A549 (cell line): ENCODE measurements at regions of chr9 and their contacts with region 1.

Region 1: DNA sequence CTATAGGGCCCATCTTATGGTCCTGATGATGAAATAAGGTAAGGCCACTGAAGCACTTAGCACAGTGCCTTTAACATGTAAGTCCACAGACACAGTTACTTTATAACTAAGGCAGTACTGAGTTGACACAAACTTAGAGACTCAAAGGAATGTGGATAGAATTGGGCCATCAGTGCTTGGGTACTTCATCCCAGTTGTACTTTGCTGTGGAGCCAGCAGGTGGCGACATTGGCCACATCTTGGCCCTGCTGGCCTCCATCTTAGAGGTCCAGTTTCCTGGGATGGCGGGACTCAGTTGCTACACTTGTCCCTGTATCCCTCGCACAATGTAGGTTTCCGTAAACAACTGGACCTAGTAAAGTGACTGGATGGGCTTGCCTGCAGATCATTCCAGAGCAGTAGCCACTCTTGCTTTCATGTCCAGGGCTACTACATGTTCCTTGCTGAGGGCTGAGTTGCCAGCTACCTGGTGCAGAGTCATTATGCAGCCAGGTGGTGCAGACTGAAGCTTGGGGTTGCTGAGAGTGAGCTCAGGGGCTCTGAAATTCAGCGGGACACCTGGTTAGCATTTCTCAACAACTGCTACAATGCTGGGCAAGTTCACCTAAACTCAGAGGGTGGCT is 10.6 kb downstream of the MTAP start:
- DNase-seq: peak in 1 of 2 experiments; percentile 77
- ATAC-seq: peak; percentile 84 to 85
- H3K4me3 ChIP-seq: no peak overlapping the region
- H3K27ac ChIP-seq: peak overlapping the region; percentile 56 to 75
- H3K4me1 ChIP-seq: peaks cover 51% of the 10 kb centered on the region
- CTCF ChIP-seq: peak; percentile 88
- EP300 ChIP-seq: no peak
- POLR2A ChIP-seq: no peak
- RAD21 ChIP-seq: peak; percentile 90 to 92

Region 2: DNA sequence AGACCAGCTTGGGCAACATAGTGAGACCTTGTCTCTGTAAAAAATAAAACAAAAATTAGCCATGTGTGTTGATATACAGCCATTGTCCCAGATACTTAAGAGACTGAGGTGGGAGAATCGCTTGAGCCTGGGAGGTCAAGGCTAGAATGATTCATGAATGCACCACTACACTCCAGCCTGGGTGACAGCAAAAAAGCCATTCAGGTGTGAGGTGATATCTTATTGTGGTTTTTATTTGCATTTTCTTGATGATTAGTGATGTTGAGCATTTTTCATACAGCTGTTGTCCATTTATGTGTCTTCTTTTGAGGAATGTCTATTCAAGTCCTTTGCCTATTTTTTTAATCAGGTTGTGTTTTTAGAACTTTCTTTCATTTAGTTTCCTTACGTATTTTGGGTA is 12.6 kb after region 1 on chr9:
- CTCF ChIA-PET with region 1: interaction called, 39 read pairs
- POLR2A ChIA-PET with region 1: no interaction called
- DNase-seq: no peak
- ATAC-seq: no peak
- H3K4me3 ChIP-seq: no peak overlapping the region
- H3K27ac ChIP-seq: peak overlapping the region in 1 of 2 experiments; percentile 60; a peak in 4 of 6 replicates
- H3K4me1 ChIP-seq: peaks cover 41% of the 10 kb centered on the region
- CTCF ChIP-seq: no peak
- EP300 ChIP-seq: no peak
- POLR2A ChIP-seq: no peak
- RAD21 ChIP-seq: no peak

Region 3: GRCh38 chr9:22131817-22132216 is 318.8 kb after region 1 on chr9:
- CTCF ChIA-PET with region 1: interaction called, 10 read pairs
- POLR2A ChIA-PET with region 1: no interaction called
- DNase-seq: no peak
- ATAC-seq: no peak
- H3K4me3 ChIP-seq: no peak overlapping the region
- H3K27ac ChIP-seq: no peak overlapping the region
- H3K4me1 ChIP-seq: peaks cover 53% of the 10 kb centered on the region
- CTCF ChIP-seq: no peak
- EP300 ChIP-seq: no peak
- POLR2A ChIP-seq: no peak
- RAD21 ChIP-seq: no peak

Region 4: DNA sequence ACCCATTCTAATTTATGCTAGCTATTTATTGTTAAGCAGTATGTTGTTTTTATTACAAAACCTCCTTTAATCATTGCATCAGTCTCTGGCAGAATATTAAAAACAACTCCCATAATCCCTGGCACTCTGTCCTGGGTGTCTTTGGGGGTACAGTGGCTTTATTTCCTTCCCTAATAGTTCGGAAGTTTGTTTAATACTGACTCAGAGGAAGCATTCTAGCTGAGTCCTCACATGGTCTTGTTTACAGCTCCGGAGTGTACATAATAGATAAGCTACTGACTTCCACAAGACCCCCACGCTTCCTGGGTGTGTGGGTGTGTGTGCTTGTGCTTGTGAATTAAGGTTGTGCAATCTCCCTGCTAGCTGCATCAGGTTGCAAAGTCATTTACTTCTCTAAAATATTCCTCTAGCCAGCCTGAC is 345.9 kb after region 1 on chr9:
- CTCF ChIA-PET with region 1: interaction called, 13 read pairs
- POLR2A ChIA-PET with region 1: no interaction called
- DNase-seq: peak in 1 of 2 experiments; percentile 94
- ATAC-seq: peak; percentile 90 to 97
- H3K4me3 ChIP-seq: peak overlapping the region; percentile 18; the same call in 1 of the 3 replicates
- H3K27ac ChIP-seq: peak overlapping the region; percentile 89 to 90
- H3K4me1 ChIP-seq: peaks cover 57% of the 10 kb centered on the region
- CTCF ChIP-seq: no peak
- EP300 ChIP-seq: peak; percentile 99
- POLR2A ChIP-seq: no peak
- RAD21 ChIP-seq: peak; percentile 17 to 68; a peak in 4 of 5 replicates

Region 5: GRCh38 chr9:22211593-22212360 is 398.7 kb after region 1 on chr9:
- CTCF ChIA-PET with region 1: interaction called, 17 read pairs
- POLR2A ChIA-PET with region 1: no interaction called
- DNase-seq: peak; percentile 69 to 80
- ATAC-seq: peak; percentile 88 to 89
- H3K4me3 ChIP-seq: no peak overlapping the region
- H3K27ac ChIP-seq: peak overlapping the region; percentile 71 to 87
- H3K4me1 ChIP-seq: peaks cover 79% of the 10 kb centered on the region
- CTCF ChIP-seq: no peak
- EP300 ChIP-seq: peak; percentile 40 to 65; a peak in 3 of 5 replicates
- POLR2A ChIP-seq: no peak
- RAD21 ChIP-seq: peak in 1 of 2 experiments; percentile 34; a peak in 1 of 5 replicates

Region 6: GRCh38 chr9:22446950-22447617 is 634.0 kb after region 1 on chr9:
- CTCF ChIA-PET with region 1: interaction called, 34 read pairs
- POLR2A ChIA-PET with region 1: no interaction called
- DNase-seq: peak; percentile 72 to 83
- ATAC-seq: peak; percentile 94 to 96
- H3K4me3 ChIP-seq: peak overlapping the region; percentile 86
- H3K27ac ChIP-seq: peak overlapping the region; percentile 81 to 86
- H3K4me1 ChIP-seq: peaks cover 24% of the 10 kb centered on the region; the same call in 2 of the 3 replicates
- CTCF ChIP-seq: peak; percentile 53
- EP300 ChIP-seq: no peak
- POLR2A ChIP-seq: peak; percentile 49
- RAD21 ChIP-seq: peak in 1 of 2 experiments; percentile 29; a peak in 1 of 5 replicates